B cell (primary cell): ENCODE measurements at regions of chr17 and their contacts with region 1.

Region 1: GRCh38 chr17:47315451-47316266 is 8.1 kb upstream of the EFCAB13 start:
- DNase-seq: peak; percentile 79
- ATAC-seq: peak; percentile 96
- H3K4me3 ChIP-seq: no peak overlapping the region
- H3K4me3 Mint-ChIP-seq: no peak overlapping the region
- H3K27ac ChIP-seq: no peak overlapping the region
- H3K27ac Mint-ChIP-seq: no peak overlapping the region
- H3K4me1 ChIP-seq: no peaks in the 10 kb centered on the region
- H3K4me1 Mint-ChIP-seq: peaks cover 6% of the 10 kb centered on the region
- H3K27me3 ChIP-seq: no peaks in the 10 kb centered on the region
- H3K27me3 Mint-ChIP-seq: no peaks in the 10 kb centered on the region
- CTCF ChIP-seq: peak; percentile 96

Region 2: GRCh38 chr17:47188876-47189731 is 126.6 kb before region 1 on chr17 and contains the start of gene CDC27:
- CTCF ChIA-PET with region 1: interaction called, 5 read pairs
- POLR2A ChIA-PET with region 1: no interaction called
- intact Hi-C with region 1: loop called (anchors 2 kb)
- DNase-seq: peak; percentile 100
- ATAC-seq: peak; percentile 90
- H3K4me3 ChIP-seq: peak within 1 kb of the TSS; percentile 74 to 99 (median 88)
- H3K4me3 Mint-ChIP-seq: peak within 1 kb of the TSS; percentile 96
- H3K27ac ChIP-seq: peak within 1 kb of the TSS; percentile 92 to 95
- H3K27ac Mint-ChIP-seq: peak within 1 kb of the TSS; percentile 95
- H3K4me1 ChIP-seq: peaks cover 21 to 30% of the 10 kb centered on the region in 2 donors
- H3K4me1 Mint-ChIP-seq: peaks cover 53% of the 10 kb centered on the region
- H3K27me3 ChIP-seq: no peaks in the 10 kb centered on the region
- H3K27me3 Mint-ChIP-seq: no peaks in the 10 kb centered on the region
- CTCF ChIP-seq: no peak
- total RNA-seq, gene CDC27: 86.5 and 90.7 TPM in 2 replicates

Region 3: DNA sequence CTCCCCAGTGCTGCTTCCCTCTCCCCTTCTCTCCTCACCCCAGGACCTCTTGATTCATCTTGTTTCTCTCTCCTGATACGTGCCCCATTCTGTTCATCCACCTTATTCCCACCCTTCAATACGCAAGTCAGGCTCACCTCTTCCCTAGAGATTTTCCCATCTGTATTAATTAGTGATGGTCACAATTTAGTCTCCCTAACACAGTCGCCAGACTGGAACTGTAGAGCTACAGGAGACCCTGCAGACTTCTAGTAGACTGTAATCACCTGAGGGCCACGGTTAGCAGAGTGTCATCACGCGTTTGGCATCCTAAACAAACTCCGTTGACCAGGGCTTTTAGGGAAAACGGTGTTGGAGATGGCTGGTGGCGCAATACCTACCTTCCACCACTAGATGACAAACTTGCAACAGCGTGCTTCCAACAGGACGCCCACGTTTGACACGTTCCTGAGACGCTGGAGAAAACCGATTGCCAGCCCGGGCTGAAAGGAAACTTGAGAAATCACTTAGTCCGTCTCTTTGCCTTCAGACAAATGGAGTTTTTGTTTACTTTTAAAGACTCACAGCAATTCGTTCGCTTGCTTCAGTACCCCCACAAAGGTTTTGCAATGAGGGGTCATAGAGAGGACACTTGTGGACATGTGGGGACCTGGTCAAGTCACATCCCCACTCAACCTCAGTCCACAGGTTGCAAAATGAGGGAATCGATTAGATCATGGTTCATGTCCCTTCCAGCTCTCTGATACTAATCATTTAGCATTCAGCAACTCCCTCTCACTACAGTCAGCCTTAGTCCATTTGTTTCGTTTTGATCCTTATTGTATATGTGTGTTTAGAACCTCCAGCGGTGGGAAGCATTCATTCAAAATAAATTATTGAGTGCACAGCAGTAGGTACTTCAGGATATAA is 85.9 kb before region 1 on chr17:
- CTCF ChIA-PET with region 1: interaction called, 226 read pairs
- POLR2A ChIA-PET with region 1: interaction called, 5 read pairs
- intact Hi-C with region 1: loop called (anchors 1 kb)
- DNase-seq: peak; percentile 86
- ATAC-seq: peak; percentile 92
- H3K4me3 ChIP-seq: peak overlapping the region; percentile 6 to 42 (median 35)
- H3K4me3 Mint-ChIP-seq: peak overlapping the region; percentile 77
- H3K27ac ChIP-seq: no peak overlapping the region
- H3K27ac Mint-ChIP-seq: peak overlapping the region; percentile 57
- H3K4me1 ChIP-seq: peaks cover 22 to 23% of the 10 kb centered on the region in 2 donors
- H3K4me1 Mint-ChIP-seq: peaks cover 28% of the 10 kb centered on the region
- H3K27me3 ChIP-seq: no peaks in the 10 kb centered on the region
- H3K27me3 Mint-ChIP-seq: no peaks in the 10 kb centered on the region
- CTCF ChIP-seq: peak; percentile 97

Region 4: GRCh38 chr17:47253541-47254402 is 61.9 kb before region 1 on chr17 and contains the start of gene ITGB3:
- CTCF ChIA-PET with region 1: interaction called, 55 read pairs
- POLR2A ChIA-PET with region 1: interaction called, 11 read pairs
- intact Hi-C with region 1: loop called (anchors 1 kb)
- DNase-seq: peak; percentile 88
- ATAC-seq: peak; percentile 98
- H3K4me3 ChIP-seq: peak within 1 kb of the TSS in 4 of 5 experiments; percentile 54 to 71 (median 62)
- H3K4me3 Mint-ChIP-seq: peak within 1 kb of the TSS; percentile 94
- H3K27ac ChIP-seq: no peak within 1 kb of the TSS
- H3K27ac Mint-ChIP-seq: peak within 1 kb of the TSS; percentile 61
- H3K4me1 ChIP-seq: peaks cover 4 to 18% of the 10 kb centered on the region in 2 donors
- H3K4me1 Mint-ChIP-seq: peaks cover 17% of the 10 kb centered on the region
- H3K27me3 ChIP-seq: peaks cover 0 to 11% (median 3%) of the 10 kb centered on the region in 4 experiments
- H3K27me3 Mint-ChIP-seq: peaks cover 7% of the 10 kb centered on the region
- CTCF ChIP-seq: peak; percentile 67
- total RNA-seq, gene ITGB3: 11.4 and 14.2 TPM in 2 replicates

Region 5: DNA sequence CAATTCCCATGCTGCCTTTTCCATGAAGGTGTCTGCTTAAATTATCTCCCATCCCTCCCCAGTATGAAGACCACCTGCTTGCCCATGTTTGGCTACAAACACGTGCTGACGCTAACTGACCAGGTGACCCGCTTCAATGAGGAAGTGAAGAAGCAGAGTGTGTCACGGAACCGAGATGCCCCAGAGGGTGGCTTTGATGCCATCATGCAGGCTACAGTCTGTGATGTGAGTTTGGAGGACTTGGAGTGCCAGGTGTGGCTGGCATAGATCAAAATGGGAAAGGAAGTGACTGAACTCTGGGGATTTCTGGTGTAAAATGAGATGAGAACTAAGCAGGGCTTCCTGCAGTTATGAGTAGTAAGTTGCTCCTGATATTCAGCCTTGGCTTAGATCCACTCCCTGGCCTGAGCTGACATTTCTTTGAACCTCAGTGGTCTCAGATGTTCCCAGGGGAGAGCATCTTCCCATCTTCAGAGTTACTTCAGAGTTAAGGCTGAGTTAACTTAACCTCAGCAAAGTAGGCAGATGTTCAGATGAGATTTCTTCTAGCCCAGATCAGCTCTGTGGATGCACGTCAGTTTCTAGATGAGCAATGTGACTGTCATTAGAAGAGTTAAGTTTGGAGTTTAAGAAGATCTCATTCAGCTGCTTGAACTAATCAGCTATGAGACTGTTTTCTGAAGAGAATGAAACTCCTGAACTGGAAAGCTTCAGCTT is 29.3 kb before region 1 on chr17:
- CTCF ChIA-PET with region 1: interaction called, 25 read pairs
- POLR2A ChIA-PET with region 1: interaction called, 3 read pairs
- intact Hi-C with region 1: no loop called
- DNase-seq: peak; percentile 83
- ATAC-seq: peak; percentile 87
- H3K4me3 ChIP-seq: no peak overlapping the region
- H3K4me3 Mint-ChIP-seq: peak overlapping the region; percentile 72
- H3K27ac ChIP-seq: peak overlapping the region; percentile 27 to 68
- H3K27ac Mint-ChIP-seq: peak overlapping the region; percentile 89
- H3K4me1 ChIP-seq: peaks cover 29% of the 10 kb centered on the region in 2 donors
- H3K4me1 Mint-ChIP-seq: peaks cover 41% of the 10 kb centered on the region
- H3K27me3 ChIP-seq: no peaks in the 10 kb centered on the region
- H3K27me3 Mint-ChIP-seq: no peaks in the 10 kb centered on the region
- CTCF ChIP-seq: no peak

Region 6: GRCh38 chr17:47335101-47335936 is 19.7 kb after region 1 on chr17:
- CTCF ChIA-PET with region 1: interaction called, 10 read pairs
- POLR2A ChIA-PET with region 1: interaction called, 3 read pairs
- intact Hi-C with region 1: no loop called
- DNase-seq: no peak
- ATAC-seq: no peak
- H3K4me3 ChIP-seq: no peak overlapping the region
- H3K4me3 Mint-ChIP-seq: no peak overlapping the region
- H3K27ac ChIP-seq: no peak overlapping the region
- H3K27ac Mint-ChIP-seq: no peak overlapping the region
- H3K4me1 ChIP-seq: no peaks in the 10 kb centered on the region
- H3K4me1 Mint-ChIP-seq: no peaks in the 10 kb centered on the region
- H3K27me3 ChIP-seq: no peaks in the 10 kb centered on the region
- H3K27me3 Mint-ChIP-seq: no peaks in the 10 kb centered on the region
- CTCF ChIP-seq: no peak

Region 7: GRCh38 chr17:47663912-47664625 is 348.4 kb after region 1 on chr17:
- CTCF ChIA-PET with region 1: no interaction called
- POLR2A ChIA-PET with region 1: no interaction called
- intact Hi-C with region 1: no loop called
- DNase-seq: peak; percentile 82
- ATAC-seq: peak; percentile 70
- H3K4me3 ChIP-seq: peak overlapping the region; percentile 25 to 53 (median 40)
- H3K4me3 Mint-ChIP-seq: peak overlapping the region; percentile 82
- H3K27ac ChIP-seq: peak overlapping the region; percentile 62 to 72
- H3K27ac Mint-ChIP-seq: peak overlapping the region; percentile 87
- H3K4me1 ChIP-seq: peaks cover 28 to 39% of the 10 kb centered on the region in 2 donors
- H3K4me1 Mint-ChIP-seq: peaks cover 30% of the 10 kb centered on the region
- H3K27me3 ChIP-seq: no peaks in the 10 kb centered on the region
- H3K27me3 Mint-ChIP-seq: no peaks in the 10 kb centered on the region
- CTCF ChIP-seq: peak; percentile 92